Caco-2 (cell line): ENCODE measurements at regions of chr2 and their contacts with region 1.

Region 1: DNA sequence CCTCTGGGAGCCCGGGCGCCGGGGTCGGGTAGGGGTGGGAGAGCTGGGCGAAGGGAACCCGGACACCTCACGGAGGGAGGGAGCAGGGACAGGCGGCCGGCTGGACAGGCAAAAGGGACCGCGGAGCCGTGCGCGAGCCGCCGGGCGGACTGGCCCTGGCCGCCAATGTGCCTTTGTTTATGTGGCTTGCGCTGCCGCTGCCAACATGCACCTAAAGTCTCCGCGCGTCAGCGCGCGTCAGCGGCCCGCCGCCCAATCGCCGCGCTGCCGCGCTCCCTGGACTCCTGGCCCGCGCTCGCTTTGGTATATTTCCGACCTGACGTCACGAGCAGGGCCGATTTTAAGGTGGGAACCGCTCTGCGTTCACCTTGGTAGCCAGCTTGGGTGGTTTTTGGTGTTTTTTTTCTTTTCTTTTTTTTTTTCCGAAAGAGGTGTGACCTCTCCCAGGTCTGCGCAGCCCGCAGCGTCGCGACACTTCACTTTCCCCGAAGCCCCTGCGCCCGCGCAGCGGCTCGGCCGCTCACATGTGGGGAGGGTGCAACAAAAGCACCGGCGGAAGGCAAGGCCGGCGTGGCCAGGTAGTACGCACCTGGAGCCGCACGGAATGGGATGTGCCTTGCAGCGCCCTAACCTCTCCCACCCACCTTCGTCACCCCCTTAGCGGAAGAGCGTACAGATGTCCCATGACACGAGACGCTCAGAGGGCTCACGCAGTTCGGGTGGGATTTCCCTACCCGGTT is at the start of gene NR4A2:
- DNase-seq: peak; percentile 84
- H3K4me3 ChIP-seq: peak within 1 kb of the TSS; percentile 61
- H3K4me3 Mint-ChIP-seq: peak within 1 kb of the TSS; percentile 94
- H3K27ac Mint-ChIP-seq: peak within 1 kb of the TSS; percentile 97
- H3K4me1 ChIP-seq: no peaks in the 10 kb centered on the region
- H3K4me1 Mint-ChIP-seq: peaks cover 8% of the 10 kb centered on the region
- H3K27me3 ChIP-seq: no peaks in the 10 kb centered on the region
- H3K27me3 Mint-ChIP-seq: peaks cover 3% of the 10 kb centered on the region
- CTCF ChIP-seq: no peak
- total RNA-seq, gene NR4A2: 0.91 and 0.97 TPM in 2 replicates

Region 2: DNA sequence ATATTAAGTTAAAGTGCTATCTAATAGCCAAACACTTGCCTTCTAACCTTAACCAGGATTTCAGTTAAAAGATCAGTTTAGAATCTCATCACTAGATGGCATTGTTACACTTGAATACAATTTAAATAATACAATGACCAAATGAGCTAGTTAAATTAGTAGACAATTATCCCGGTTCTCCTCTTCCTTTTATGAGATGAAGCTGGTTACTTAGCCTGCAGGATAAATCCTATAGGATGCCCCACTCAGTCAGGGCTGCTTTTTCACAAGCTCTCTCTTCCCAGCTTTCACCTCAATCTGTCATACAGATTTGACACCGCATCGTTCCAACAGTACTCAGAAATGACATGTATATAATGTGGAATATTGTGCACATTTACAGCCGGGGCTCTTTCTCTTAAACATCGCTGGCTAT is 955.4 kb before region 1 on chr2:
- CTCF ChIA-PET with region 1: interaction called, 4 read pairs
- POLR2A ChIA-PET with region 1: no interaction called
- intact Hi-C with region 1: loop called (anchors 5 kb)
- DNase-seq: no peak
- H3K4me3 ChIP-seq: no peak overlapping the region
- H3K4me3 Mint-ChIP-seq: no peak overlapping the region
- H3K27ac Mint-ChIP-seq: no peak overlapping the region
- H3K4me1 ChIP-seq: no peaks in the 10 kb centered on the region
- H3K4me1 Mint-ChIP-seq: no peaks in the 10 kb centered on the region
- H3K27me3 ChIP-seq: no peaks in the 10 kb centered on the region
- H3K27me3 Mint-ChIP-seq: no peaks in the 10 kb centered on the region
- CTCF ChIP-seq: peak; percentile 6 to 27

Region 3: DNA sequence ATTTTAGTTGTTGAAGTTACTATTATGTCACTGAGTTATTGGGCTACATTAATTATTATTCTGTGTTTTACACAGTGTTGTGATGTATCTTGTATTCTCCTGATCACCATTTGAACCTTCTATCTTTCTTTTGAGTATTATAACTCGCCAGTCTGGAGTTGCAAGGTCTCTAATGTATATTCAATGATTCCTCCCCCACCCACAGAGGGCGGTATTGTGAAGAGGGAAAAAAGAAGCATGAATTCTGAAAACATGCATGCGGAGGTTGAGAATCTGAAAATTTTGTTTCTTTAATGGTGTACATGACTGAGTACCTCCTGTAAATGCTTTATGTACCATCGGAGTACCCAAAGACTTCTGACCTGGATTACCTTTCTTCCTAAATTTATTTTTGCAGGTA is 266.8 kb before region 1 on chr2:
- CTCF ChIA-PET with region 1: no interaction called
- POLR2A ChIA-PET with region 1: no interaction called
- intact Hi-C with region 1: loop called (anchors 2 kb)
- DNase-seq: peak in 1 of 2 experiments; percentile 36
- H3K4me3 ChIP-seq: no peak overlapping the region
- H3K4me3 Mint-ChIP-seq: no peak overlapping the region
- H3K27ac Mint-ChIP-seq: no peak overlapping the region
- H3K4me1 ChIP-seq: no peaks in the 10 kb centered on the region
- H3K4me1 Mint-ChIP-seq: no peaks in the 10 kb centered on the region
- H3K27me3 ChIP-seq: no peaks in the 10 kb centered on the region
- H3K27me3 Mint-ChIP-seq: no peaks in the 10 kb centered on the region
- CTCF ChIP-seq: peak; percentile 39 to 49

Region 4: GRCh38 chr2:156182141-156182540 is 150.6 kb before region 1 on chr2:
- CTCF ChIA-PET with region 1: interaction called, 5 read pairs
- POLR2A ChIA-PET with region 1: no interaction called
- intact Hi-C with region 1: loop called (anchors 2 kb)
- DNase-seq: peak; percentile 63 to 87
- H3K4me3 ChIP-seq: 0 out of 2 replicates have a peak overlapping the region, but pooled peaks have one; percentile 5
- H3K4me3 Mint-ChIP-seq: peak overlapping the region; percentile 52
- H3K27ac Mint-ChIP-seq: peak overlapping the region; percentile 80
- H3K4me1 ChIP-seq: peaks cover 19% of the 10 kb centered on the region
- H3K4me1 Mint-ChIP-seq: peaks cover 13% of the 10 kb centered on the region
- H3K27me3 ChIP-seq: no peaks in the 10 kb centered on the region
- H3K27me3 Mint-ChIP-seq: no peaks in the 10 kb centered on the region
- CTCF ChIP-seq: no peak

Region 5: DNA sequence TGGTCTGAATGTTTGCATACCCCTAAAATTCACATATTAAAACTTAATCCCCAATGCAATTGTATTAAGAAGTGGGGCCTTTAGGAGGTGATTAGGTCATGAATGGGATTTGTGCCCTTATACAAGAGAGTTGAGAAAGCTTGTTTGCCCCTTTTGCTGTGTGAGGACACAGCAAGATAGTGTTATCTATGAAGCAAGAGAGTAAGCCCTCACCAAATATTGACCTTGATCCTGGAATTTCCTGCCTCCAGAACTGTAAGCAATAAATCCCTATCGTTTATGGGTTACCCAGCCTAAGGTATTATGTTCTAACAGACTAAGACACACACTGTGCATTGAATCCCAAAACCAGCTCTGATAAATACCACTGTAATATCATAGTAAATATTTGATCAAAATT is 32.4 kb before region 1 on chr2:
- CTCF ChIA-PET with region 1: no interaction called
- POLR2A ChIA-PET with region 1: no interaction called
- intact Hi-C with region 1: loop called (anchors 2 kb)
- DNase-seq: peak; percentile 51 to 68
- H3K4me3 ChIP-seq: no peak overlapping the region
- H3K4me3 Mint-ChIP-seq: no peak overlapping the region
- H3K27ac Mint-ChIP-seq: no peak overlapping the region
- H3K4me1 ChIP-seq: 0 out of 2 replicates have a peak, but pooled peaks cover 7% of the 10 kb centered on the region
- H3K4me1 Mint-ChIP-seq: no peaks in the 10 kb centered on the region
- H3K27me3 ChIP-seq: no peaks in the 10 kb centered on the region
- H3K27me3 Mint-ChIP-seq: peaks cover 4% of the 10 kb centered on the region
- CTCF ChIP-seq: no peak

Region 6: DNA sequence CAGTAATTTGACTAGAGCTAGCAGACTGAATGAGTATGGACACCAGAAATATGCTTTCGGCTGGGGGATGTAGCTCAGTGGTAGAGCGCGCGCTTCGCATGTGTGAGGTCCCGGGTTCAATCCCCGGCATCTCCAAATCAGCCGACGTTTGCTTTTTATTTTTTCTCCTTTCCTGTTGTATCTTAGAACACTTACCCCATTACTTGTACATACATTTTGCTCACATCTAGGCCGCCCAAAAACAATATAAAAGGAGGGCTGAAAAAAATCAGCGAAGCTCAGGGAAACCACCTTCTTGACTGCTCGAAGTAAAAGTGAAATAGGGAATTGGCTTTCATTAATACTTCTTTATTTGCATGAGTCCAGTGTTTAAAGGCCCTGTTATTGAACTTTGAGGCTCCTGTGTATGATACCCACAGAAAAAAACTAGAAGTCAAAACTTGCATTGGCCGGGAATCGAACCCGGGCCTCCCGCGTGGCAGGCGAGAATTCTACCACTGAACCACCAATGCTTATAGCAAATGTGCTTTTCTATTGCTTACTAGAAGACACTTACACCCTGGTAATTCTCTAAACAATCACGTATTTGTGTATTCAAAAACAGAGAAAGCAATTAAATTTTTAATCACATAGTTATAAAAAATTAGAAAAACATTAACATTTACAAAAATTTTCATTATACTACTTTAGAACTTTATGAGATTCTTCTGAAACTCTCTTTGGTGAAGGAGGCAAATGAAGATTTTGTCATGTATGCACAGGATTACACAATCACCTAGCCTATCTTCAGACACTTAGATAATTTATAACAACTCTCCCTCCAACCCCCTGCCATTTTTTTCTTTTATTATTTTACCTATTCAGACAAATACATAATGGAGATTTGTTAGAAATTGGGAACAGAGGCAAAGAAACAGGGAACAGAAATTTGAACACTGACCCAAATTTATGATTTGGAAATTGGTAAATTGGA is 68.3 kb after region 1 on chr2:
- CTCF ChIA-PET with region 1: interaction called, 7 read pairs
- POLR2A ChIA-PET with region 1: interaction called, 5 read pairs
- intact Hi-C with region 1: loop called (anchors 1 kb)
- DNase-seq: peak; percentile 63 to 82
- H3K4me3 ChIP-seq: peak overlapping the region; percentile 74
- H3K4me3 Mint-ChIP-seq: peak overlapping the region; percentile 88
- H3K27ac Mint-ChIP-seq: peak overlapping the region; percentile 97
- H3K4me1 ChIP-seq: peaks cover 16% of the 10 kb centered on the region; the same call in 1 of the 2 replicates
- H3K4me1 Mint-ChIP-seq: peaks cover 48% of the 10 kb centered on the region
- H3K27me3 ChIP-seq: no peaks in the 10 kb centered on the region
- H3K27me3 Mint-ChIP-seq: peaks cover 8% of the 10 kb centered on the region
- CTCF ChIP-seq: no peak

Region 7: DNA sequence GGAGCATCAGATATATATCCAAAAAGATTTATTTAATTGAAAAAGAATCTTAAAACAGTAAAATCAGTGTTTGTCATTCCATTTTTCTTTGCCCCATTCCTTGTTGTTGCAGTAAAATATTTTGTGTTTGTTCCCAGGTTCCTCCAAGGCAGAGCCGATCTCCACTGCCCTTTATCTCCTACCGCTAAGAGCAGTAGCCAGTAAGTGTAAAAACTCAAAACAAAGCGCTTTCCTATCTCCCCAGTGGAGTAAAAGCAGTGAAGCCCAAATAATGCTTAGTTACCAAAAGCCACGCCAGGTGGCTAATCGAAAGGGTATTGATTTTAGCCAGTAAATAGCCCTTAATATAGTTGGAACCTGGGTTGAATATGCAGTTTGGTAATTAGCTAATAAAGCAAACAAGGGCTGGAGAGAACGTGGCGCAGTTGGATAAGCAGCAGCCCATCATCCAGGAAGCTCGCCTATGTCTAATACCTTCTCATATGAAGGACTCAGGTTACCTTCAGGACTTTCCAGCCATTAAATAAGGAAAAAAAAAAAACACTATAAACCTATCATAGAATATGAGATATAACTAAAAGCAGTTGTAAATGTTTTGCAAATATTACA is 91.1 kb after region 1 on chr2:
- CTCF ChIA-PET with region 1: no interaction called
- POLR2A ChIA-PET with region 1: no interaction called
- intact Hi-C with region 1: no loop called
- DNase-seq: no peak
- H3K4me3 ChIP-seq: no peak overlapping the region
- H3K4me3 Mint-ChIP-seq: no peak overlapping the region
- H3K27ac Mint-ChIP-seq: no peak overlapping the region
- H3K4me1 ChIP-seq: no peaks in the 10 kb centered on the region
- H3K4me1 Mint-ChIP-seq: no peaks in the 10 kb centered on the region
- H3K27me3 ChIP-seq: no peaks in the 10 kb centered on the region
- H3K27me3 Mint-ChIP-seq: no peaks in the 10 kb centered on the region
- CTCF ChIP-seq: no peak

Region 8: DNA sequence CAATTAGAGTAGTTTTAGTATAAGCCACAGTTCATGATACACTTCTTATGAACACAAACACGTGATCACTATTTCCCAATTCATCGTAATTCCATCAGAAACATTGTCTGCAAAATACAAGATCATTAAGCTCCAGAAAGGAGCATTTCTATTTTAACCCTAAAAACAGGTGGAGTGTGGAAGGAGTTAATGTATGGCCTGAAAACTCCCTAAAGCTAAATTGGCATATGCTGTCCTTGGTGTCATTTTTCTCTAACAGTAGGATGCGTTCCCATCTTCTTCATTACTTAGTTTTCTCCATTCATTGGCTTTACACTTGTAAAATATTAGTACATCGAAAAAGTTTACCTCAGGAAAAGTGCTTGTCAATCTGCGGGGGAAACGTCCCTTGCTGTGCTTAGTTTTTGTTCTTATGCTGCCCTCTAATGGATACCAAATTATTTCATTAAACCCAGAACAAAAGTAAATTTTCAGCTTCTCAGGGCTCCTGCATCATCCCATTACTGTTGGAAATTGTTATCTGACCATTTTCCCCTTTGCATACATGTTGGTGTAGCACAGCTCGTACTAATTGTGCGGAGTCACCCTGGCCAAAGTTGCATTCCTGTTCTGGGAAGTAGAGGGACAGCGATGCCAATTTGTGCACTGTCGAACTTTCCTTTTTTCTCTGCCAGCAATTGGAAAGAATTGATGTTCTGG is 256.8 kb after region 1 on chr2:
- CTCF ChIA-PET with region 1: interaction called, 7 read pairs
- POLR2A ChIA-PET with region 1: no interaction called
- intact Hi-C with region 1: loop called (anchors 1 kb)
- DNase-seq: peak in 1 of 2 experiments; percentile 33
- H3K4me3 ChIP-seq: no peak overlapping the region
- H3K4me3 Mint-ChIP-seq: no peak overlapping the region
- H3K27ac Mint-ChIP-seq: no peak overlapping the region
- H3K4me1 ChIP-seq: peaks cover 13% of the 10 kb centered on the region; the same call in 1 of the 2 replicates
- H3K4me1 Mint-ChIP-seq: peaks cover 13% of the 10 kb centered on the region
- H3K27me3 ChIP-seq: no peaks in the 10 kb centered on the region
- H3K27me3 Mint-ChIP-seq: no peaks in the 10 kb centered on the region
- CTCF ChIP-seq: peak; percentile 49 to 51

Region 9: GRCh38 chr2:156818221-156818620 is 485.5 kb after region 1 on chr2:
- CTCF ChIA-PET with region 1: no interaction called
- POLR2A ChIA-PET with region 1: no interaction called
- intact Hi-C with region 1: no loop called
- DNase-seq: no peak
- H3K4me3 ChIP-seq: no peak overlapping the region
- H3K4me3 Mint-ChIP-seq: no peak overlapping the region
- H3K27ac Mint-ChIP-seq: no peak overlapping the region
- H3K4me1 ChIP-seq: no peaks in the 10 kb centered on the region
- H3K4me1 Mint-ChIP-seq: no peaks in the 10 kb centered on the region
- H3K27me3 ChIP-seq: no peaks in the 10 kb centered on the region
- H3K27me3 Mint-ChIP-seq: no peaks in the 10 kb centered on the region
- CTCF ChIP-seq: no peak